ENCODE measurements at regions of chr17 and their contacts with region 1.

Region 1: GRCh38 chr17:80254396-80255251 is 6.0 kb upstream of the RNF213 start:
- DNase-seq: peak; percentile 73
- H3K4me3 Mint-ChIP-seq: peak overlapping the region; percentile 74
- H3K27ac Mint-ChIP-seq: peak overlapping the region; percentile 91
- H3K4me1 Mint-ChIP-seq: peaks cover 69% of the 10 kb centered on the region
- H3K27me3 Mint-ChIP-seq: no peaks in the 10 kb centered on the region

Region 2: GRCh38 chr17:80008383-80008840 is 246.2 kb before region 1 on chr17:
- intact Hi-C with region 1: loop called (anchors 5 kb)
- DNase-seq: peak; percentile 70
- H3K4me3 Mint-ChIP-seq: no peak overlapping the region
- H3K27ac Mint-ChIP-seq: no peak overlapping the region
- H3K4me1 Mint-ChIP-seq: no peaks in the 10 kb centered on the region
- H3K27me3 Mint-ChIP-seq: peaks cover 1% of the 10 kb centered on the region

Region 3: DNA sequence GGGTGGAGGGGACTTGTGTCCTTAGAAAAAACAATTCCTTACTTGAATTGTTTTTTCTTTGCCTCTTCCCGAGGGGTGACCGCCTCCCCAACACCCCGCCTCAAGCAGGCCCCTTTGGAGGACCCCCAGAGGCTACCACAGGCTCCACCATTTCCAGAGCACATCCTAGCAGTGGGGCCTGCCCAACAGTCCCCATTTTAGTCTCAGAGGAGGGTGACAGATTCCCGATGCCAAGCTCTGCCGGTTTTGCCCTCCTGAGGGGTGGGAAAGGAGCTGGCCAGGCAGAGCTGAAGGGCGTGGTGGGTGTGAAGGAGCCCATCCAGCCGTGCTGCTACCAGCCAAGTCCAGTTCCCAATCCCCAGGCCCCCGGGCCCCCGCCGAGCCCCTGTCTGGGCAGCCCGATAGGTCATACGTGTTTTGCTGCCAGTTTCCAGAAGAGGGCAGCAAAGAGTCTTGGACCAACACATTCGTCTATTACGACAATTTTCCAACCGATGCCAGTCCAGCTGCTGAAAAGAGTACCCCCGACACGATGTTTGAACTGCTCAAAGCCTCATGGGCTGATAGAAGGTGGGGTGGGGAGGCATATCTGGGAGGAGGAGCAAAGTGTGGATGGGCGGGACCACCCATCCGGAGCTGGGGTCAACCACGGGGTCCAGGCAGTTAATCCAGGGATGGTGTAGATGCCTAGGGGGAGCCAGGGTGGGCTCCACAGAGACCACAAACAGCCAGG is 172.1 kb before region 1 on chr17:
- intact Hi-C with region 1: loop called (anchors 5 kb)
- DNase-seq: peak; percentile 29
- H3K4me3 Mint-ChIP-seq: no peak overlapping the region
- H3K27ac Mint-ChIP-seq: peak overlapping the region; percentile 42
- H3K4me1 Mint-ChIP-seq: peaks cover 5% of the 10 kb centered on the region
- H3K27me3 Mint-ChIP-seq: peaks cover 4% of the 10 kb centered on the region

Region 4: GRCh38 chr17:80101011-80101945 is 153.3 kb before region 1 on chr17 and contains the start of gene GAA:
- intact Hi-C with region 1: loop called (anchors 2 kb)
- DNase-seq: peak; percentile 86
- H3K4me3 Mint-ChIP-seq: peak within 1 kb of the TSS; percentile 92
- H3K27ac Mint-ChIP-seq: peak within 1 kb of the TSS; percentile 82
- H3K4me1 Mint-ChIP-seq: peaks cover 26% of the 10 kb centered on the region
- H3K27me3 Mint-ChIP-seq: peaks cover 6% of the 10 kb centered on the region
- total RNA-seq, gene GAA: 12.3 and 13.1 TPM in 2 replicates

Region 5: GRCh38 chr17:80195731-80196529 is 58.7 kb before region 1 on chr17:
- intact Hi-C with region 1: loop called (anchors 1 kb)
- DNase-seq: peak; percentile 30
- H3K4me3 Mint-ChIP-seq: no peak overlapping the region
- H3K27ac Mint-ChIP-seq: no peak overlapping the region
- H3K4me1 Mint-ChIP-seq: no peaks in the 10 kb centered on the region
- H3K27me3 Mint-ChIP-seq: peaks cover 9% of the 10 kb centered on the region

Region 6: GRCh38 chr17:80219013-80219762 is 35.4 kb before region 1 on chr17:
- intact Hi-C with region 1: loop called (anchors 2 kb)
- DNase-seq: peak; percentile 75
- H3K4me3 Mint-ChIP-seq: peak overlapping the region; percentile 85
- H3K27ac Mint-ChIP-seq: peak overlapping the region; percentile 85
- H3K4me1 Mint-ChIP-seq: peaks cover 20% of the 10 kb centered on the region
- H3K27me3 Mint-ChIP-seq: no peaks in the 10 kb centered on the region

Region 7: DNA sequence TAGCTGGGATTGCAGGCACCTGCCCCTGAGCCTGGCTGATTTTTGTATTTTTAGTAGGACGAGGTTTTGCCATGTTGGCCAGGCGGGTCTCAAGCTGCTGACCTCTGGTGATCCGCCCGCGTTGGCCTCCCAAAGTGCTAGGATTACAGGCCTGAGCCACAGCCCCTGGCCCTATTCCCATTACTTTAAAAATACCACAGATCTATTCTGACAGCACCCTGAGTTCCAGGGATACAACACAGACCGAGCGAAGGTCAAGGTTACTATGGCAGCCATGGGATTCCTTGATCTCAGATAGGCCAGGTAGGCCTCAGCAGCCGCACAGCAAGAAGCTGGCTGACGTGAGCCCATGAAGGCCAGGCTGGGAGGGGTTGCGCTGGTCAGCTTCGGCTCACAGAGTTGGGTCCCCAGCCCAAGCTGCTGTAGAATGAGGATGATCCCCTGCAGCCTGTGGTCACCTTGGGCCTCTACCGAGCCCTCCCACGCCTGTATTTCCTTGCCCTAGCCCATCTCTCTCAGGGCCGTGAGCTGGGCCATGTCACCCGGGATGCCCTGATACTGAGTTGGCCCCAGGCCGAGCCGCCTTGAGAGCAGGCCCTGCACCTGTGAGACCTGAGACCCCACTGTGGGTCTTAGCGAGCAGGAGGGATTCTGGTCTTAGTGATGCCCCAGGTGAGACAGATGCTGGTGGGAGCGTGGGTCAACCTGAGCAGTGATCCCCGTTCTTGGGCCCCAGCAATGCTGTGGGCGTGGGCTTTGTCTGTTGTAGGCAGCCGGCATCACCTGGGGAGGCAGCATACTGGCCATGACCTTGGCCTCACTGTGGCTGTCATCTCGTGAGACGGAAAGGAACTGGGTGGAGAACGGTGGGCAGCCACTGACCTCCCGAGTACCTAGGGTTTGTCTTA is 10.8 kb before region 1 on chr17:
- intact Hi-C with region 1: no loop called
- DNase-seq: no peak
- H3K4me3 Mint-ChIP-seq: no peak overlapping the region
- H3K27ac Mint-ChIP-seq: no peak overlapping the region
- H3K4me1 Mint-ChIP-seq: no peaks in the 10 kb centered on the region
- H3K27me3 Mint-ChIP-seq: no peaks in the 10 kb centered on the region

Measured in activated T-helper 1 cell treated with anti-CD3 and anti-CD28 coated beads, Interleukin-12 subunit alpha, Interleukin-12 subunit beta, Interleukin-2, Interleukin-4 antibody, amounts not matched to agents 30 ng/mL and 10 ng/mL and 1 ng/mL, durations not matched to agents 14 hours and 24 hours and 36 hours (primary cell).